ENCODE measurements at regions of chr16 and their contacts with region 1.

Region 1: DNA sequence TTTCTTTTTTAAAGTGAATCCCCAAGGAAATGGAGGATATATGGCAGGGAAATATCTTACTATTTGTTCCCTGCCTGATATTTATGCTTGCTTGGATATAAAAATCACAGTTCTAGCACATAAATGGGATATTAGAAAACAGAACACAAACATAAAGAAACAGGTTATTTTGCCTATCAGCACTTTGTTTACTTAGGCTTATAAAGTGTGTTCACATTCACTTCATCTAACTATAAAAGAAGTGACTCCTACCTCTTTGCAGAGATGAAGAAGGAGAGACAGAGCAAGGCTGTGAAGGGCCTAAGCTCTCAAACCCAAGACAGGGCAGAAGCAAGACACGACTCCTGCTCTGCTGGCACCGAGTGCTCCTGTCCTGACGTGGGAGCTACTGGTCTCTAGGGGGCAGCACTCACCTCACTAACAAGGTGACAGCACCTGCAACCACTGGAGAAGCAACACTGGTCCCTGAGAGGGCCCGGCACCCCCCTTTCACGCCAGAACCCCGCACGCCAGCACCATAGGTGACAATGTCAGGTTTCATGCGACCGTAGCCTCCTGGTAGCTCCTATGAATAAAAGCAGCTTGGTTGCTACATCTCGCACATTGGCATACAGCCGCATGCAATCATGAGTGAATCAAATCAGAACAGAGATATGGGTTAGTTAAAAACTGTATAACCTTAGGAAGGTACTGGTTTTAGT is 32.0 kb downstream of the MBTPS1 start:
- DNase-seq: peak; percentile 81 to 83
- H3K4me3 ChIP-seq: no peak overlapping the region
- H3K4me3 Mint-ChIP-seq: no peak overlapping the region
- H3K27ac Mint-ChIP-seq: no peak overlapping the region
- H3K4me1 ChIP-seq: no peaks in the 10 kb centered on the region
- H3K4me1 Mint-ChIP-seq: no peaks in the 10 kb centered on the region
- H3K27me3 ChIP-seq: no peaks in the 10 kb centered on the region
- H3K27me3 Mint-ChIP-seq: no peaks in the 10 kb centered on the region
- CTCF ChIP-seq: peak; percentile 88 to 92

Region 2: DNA sequence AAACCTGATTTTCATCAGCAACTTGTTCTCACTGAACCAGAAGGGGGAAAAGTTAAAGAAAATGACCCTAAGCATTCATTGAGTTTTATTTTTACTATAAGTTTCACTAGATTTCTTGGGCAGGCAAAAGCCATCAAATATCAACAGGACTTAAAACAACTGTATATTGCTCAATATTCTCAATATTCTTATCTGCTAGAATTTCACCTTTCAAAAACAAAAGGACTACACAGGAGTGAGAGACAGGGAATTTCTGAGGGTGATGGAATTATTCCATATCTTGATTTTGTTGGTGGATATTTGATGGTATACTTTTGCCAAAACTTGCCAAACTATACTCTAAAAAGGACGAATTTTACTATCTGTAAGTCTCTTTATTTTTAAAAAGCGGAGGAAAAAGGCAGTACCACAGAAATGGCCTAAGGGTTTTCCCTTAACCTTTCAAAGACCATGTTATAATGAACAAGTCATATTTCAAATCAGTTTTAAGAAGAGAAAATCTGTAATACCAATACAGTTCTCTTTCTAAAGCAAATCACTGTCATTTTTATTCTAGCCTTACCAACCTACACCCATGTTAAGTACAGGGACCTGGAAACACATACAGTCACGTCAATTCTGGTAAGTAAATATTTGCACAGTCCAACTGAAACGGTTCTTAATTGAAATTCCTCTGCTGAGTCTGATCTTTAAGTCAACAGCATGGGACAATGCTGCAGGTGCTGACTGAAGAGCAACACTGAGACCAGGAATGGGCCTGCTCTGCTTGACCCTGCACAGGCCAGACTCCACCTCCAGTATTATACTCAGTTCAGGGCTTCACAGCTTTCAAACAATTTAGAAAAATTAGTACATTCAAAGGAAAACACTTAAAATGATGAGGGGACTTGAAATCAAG is 11.6 kb after region 1 on chr16:
- CTCF ChIA-PET with region 1: interaction called, 3 read pairs
- POLR2A ChIA-PET with region 1: no interaction called
- intact Hi-C with region 1: loop called (anchors 1 kb)
- DNase-seq: peak; percentile 74 to 79
- H3K4me3 ChIP-seq: no peak overlapping the region
- H3K4me3 Mint-ChIP-seq: no peak overlapping the region
- H3K27ac Mint-ChIP-seq: peak overlapping the region; percentile 65
- H3K4me1 ChIP-seq: peaks cover 19% of the 10 kb centered on the region
- H3K4me1 Mint-ChIP-seq: peaks cover 6% of the 10 kb centered on the region
- H3K27me3 ChIP-seq: no peaks in the 10 kb centered on the region
- H3K27me3 Mint-ChIP-seq: no peaks in the 10 kb centered on the region
- CTCF ChIP-seq: no peak

Region 3: GRCh38 chr16:84175350-84176081 is 90.8 kb after region 1 on chr16:
- CTCF ChIA-PET with region 1: interaction called, 8 read pairs
- POLR2A ChIA-PET with region 1: no interaction called
- intact Hi-C with region 1: loop called (anchors 1 kb)
- DNase-seq: peak; percentile 70 to 80
- H3K4me3 ChIP-seq: no peak overlapping the region
- H3K4me3 Mint-ChIP-seq: no peak overlapping the region
- H3K27ac Mint-ChIP-seq: peak overlapping the region; percentile 36
- H3K4me1 ChIP-seq: peaks cover 16% of the 10 kb centered on the region
- H3K4me1 Mint-ChIP-seq: no peaks in the 10 kb centered on the region
- H3K27me3 ChIP-seq: no peaks in the 10 kb centered on the region
- H3K27me3 Mint-ChIP-seq: no peaks in the 10 kb centered on the region
- CTCF ChIP-seq: peak; percentile 67 to 69

Region 4: GRCh38 chr16:84484579-84485254 is 400.0 kb after region 1 on chr16:
- CTCF ChIA-PET with region 1: interaction called, 3 read pairs
- POLR2A ChIA-PET with region 1: no interaction called
- intact Hi-C with region 1: loop called (anchors 10 kb)
- DNase-seq: peak; percentile 65 to 78
- H3K4me3 ChIP-seq: no peak overlapping the region
- H3K4me3 Mint-ChIP-seq: no peak overlapping the region
- H3K27ac Mint-ChIP-seq: no peak overlapping the region
- H3K4me1 ChIP-seq: no peaks in the 10 kb centered on the region
- H3K4me1 Mint-ChIP-seq: no peaks in the 10 kb centered on the region
- H3K27me3 ChIP-seq: no peaks in the 10 kb centered on the region
- H3K27me3 Mint-ChIP-seq: no peaks in the 10 kb centered on the region
- CTCF ChIP-seq: peak; percentile 87 to 90